ENCODE measurements at regions of chr7 and their contacts with region 1.

Region 1: GRCh38 chr7:20598459-20599309 is 16.8 kb upstream of the ABCB5 start:
- DNase-seq: peak; percentile 95
- H3K4me3 ChIP-seq: peak overlapping the region in 2 of 3 experiments; percentile 2 to 14
- H3K27ac ChIP-seq: peak overlapping the region; percentile 44
- H3K4me1 ChIP-seq: peaks cover 47% of the 10 kb centered on the region
- H3K27me3 ChIP-seq: no peaks in the 10 kb centered on the region
- CTCF ChIP-seq: peak; percentile 53 to 63
- POLR2A ChIP-seq: no peak

Region 2: GRCh38 chr7:19747740-19748339 is 850.8 kb before region 1 on chr7:
- CTCF ChIA-PET with region 1: interaction called, 280 read pairs
- POLR2A ChIA-PET with region 1: no interaction called
- dilution Hi-C with region 1: no loop called
- intact Hi-C with region 1: loop called (anchors 1 kb)
- DNase-seq: peak; percentile 43
- H3K4me3 ChIP-seq: no peak overlapping the region
- H3K27ac ChIP-seq: no peak overlapping the region
- H3K4me1 ChIP-seq: no peaks in the 10 kb centered on the region
- H3K27me3 ChIP-seq: peaks cover 1 to 12% of the 10 kb centered on the region in 2 experiments
- CTCF ChIP-seq: peak; percentile 25 to 46
- POLR2A ChIP-seq: no peak

Region 3: DNA sequence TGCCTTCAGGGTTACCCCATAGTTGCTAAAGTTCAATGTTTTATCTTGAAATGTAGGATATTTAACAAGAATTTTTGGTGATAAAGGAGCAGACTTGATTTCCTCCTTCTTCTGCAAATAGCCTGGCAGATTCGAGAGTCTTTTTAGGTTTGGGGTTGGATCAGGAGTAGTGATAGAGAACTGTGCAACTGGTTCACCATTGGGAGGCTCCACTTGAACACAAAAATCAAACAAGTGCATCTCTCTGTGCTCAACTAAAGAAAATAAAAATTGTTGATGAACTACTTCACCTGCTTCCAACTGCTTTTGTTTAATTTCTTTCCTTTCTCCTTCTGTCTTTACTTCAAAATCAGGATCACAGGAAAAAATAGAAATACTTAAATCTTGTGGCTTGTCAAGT is 440.0 kb before region 1 on chr7:
- CTCF ChIA-PET with region 1: interaction called, 53 read pairs
- POLR2A ChIA-PET with region 1: no interaction called
- dilution Hi-C with region 1: no loop called
- intact Hi-C with region 1: loop called (anchors 1 kb)
- DNase-seq: peak; percentile 39
- H3K4me3 ChIP-seq: no peak overlapping the region
- H3K27ac ChIP-seq: no peak overlapping the region
- H3K4me1 ChIP-seq: no peaks in the 10 kb centered on the region
- H3K27me3 ChIP-seq: no peaks in the 10 kb centered on the region
- CTCF ChIP-seq: peak in 1 of 2 donors; percentile 18
- POLR2A ChIP-seq: no peak

Region 4: GRCh38 chr7:20330240-20330927 is 268.3 kb before region 1 on chr7 and contains the start of gene ITGB8:
- CTCF ChIA-PET with region 1: interaction called, 84 read pairs
- POLR2A ChIA-PET with region 1: interaction called, 8 read pairs
- dilution Hi-C with region 1: no loop called
- intact Hi-C with region 1: loop called (anchors 1 kb)
- DNase-seq: peak; percentile 90
- H3K4me3 ChIP-seq: peak within 1 kb of the TSS; percentile 51 to 62 (median 53)
- H3K27ac ChIP-seq: peak within 1 kb of the TSS; percentile 87
- H3K4me1 ChIP-seq: peaks cover 14% of the 10 kb centered on the region
- H3K27me3 ChIP-seq: no peaks in the 10 kb centered on the region
- CTCF ChIP-seq: no peak
- POLR2A ChIP-seq: no peak
- total RNA-seq, gene ITGB8: 6.5 and 8.2 TPM in 2 replicates

Region 5: GRCh38 chr7:20440472-20441105 is 158.1 kb before region 1 on chr7:
- CTCF ChIA-PET with region 1: interaction called, 24 read pairs
- POLR2A ChIA-PET with region 1: interaction called, 3 read pairs
- dilution Hi-C with region 1: no loop called
- intact Hi-C with region 1: loop called (anchors 1 kb)
- DNase-seq: peak; percentile 40
- H3K4me3 ChIP-seq: no peak overlapping the region
- H3K27ac ChIP-seq: no peak overlapping the region
- H3K4me1 ChIP-seq: peaks cover 14% of the 10 kb centered on the region
- H3K27me3 ChIP-seq: no peaks in the 10 kb centered on the region
- CTCF ChIP-seq: peak; percentile 28 to 33
- POLR2A ChIP-seq: no peak

Region 6: DNA sequence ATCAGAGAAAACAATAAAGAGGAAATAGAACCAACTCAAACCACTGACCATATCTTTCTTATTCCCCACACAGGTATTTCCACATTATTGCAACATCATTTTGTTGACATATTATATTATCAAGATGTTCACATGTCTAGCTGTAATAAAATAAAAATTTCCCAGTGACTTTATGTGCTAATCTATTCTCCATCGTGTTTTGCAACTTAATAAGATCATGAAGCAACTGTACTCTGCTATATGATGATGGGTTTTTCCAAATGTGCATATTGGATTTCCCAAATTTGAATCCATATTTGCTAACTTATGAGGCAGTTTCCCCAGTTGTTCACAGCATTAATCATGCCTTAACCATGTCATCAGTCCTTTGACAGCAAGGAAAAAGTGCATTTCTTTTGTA is 140.2 kb before region 1 on chr7:
- CTCF ChIA-PET with region 1: no interaction called
- POLR2A ChIA-PET with region 1: no interaction called
- dilution Hi-C with region 1: no loop called
- intact Hi-C with region 1: no loop called
- DNase-seq: no peak
- H3K4me3 ChIP-seq: no peak overlapping the region
- H3K27ac ChIP-seq: no peak overlapping the region
- H3K4me1 ChIP-seq: no peaks in the 10 kb centered on the region
- H3K27me3 ChIP-seq: no peaks in the 10 kb centered on the region
- CTCF ChIP-seq: no peak
- POLR2A ChIP-seq: no peak

Region 7: DNA sequence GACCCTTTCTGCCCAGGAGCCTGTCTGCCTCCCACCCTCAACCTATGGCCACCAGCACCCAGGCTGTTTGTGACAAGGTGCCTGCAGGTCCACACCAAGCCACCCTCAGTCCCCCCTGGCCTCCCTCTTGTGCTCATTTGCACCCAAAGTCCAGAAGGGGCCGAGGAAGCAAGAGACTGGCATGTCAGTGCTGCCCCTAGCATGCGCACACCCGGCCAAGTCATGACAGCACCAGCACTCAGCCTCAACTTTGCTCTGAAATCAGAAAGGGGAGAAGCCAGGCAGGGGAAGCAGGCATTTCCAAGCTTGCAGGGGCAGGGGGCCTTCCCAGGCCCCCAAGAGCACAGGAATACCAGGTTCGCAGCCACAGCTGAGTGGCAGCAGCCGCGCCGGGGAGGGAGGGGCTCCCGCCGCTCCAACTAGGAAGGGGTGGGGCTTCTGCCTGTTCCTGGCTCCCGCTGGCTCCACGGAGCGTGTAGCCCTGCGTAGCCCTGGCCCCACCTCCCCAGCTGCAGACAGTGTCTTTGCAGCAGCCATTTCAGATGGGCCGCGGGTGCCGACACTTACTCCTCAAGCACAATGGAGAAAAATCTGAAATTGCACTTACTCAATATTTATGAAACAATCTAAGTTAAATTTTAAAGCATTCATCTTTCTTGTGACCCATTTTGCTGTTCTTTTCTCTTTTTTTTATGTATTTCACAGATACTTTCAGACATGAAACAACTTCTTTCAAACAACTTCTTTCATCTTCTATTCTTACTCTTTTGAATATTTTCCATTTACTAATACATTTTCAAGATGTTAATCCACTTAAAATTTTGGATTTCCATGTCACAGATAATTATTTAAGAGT is 38.1 kb before region 1 on chr7:
- CTCF ChIA-PET with region 1: interaction called, 8 read pairs
- POLR2A ChIA-PET with region 1: no interaction called
- dilution Hi-C with region 1: no loop called
- intact Hi-C with region 1: loop called (anchors 1 kb)
- DNase-seq: no peak
- H3K4me3 ChIP-seq: no peak overlapping the region
- H3K27ac ChIP-seq: peak overlapping the region; percentile 100
- H3K4me1 ChIP-seq: peaks cover 24% of the 10 kb centered on the region
- H3K27me3 ChIP-seq: no peaks in the 10 kb centered on the region
- CTCF ChIP-seq: no peak
- POLR2A ChIP-seq: no peak

Region 8: GRCh38 chr7:20895563-20895962 is 296.9 kb after region 1 on chr7:
- CTCF ChIA-PET with region 1: no interaction called
- POLR2A ChIA-PET with region 1: no interaction called
- dilution Hi-C with region 1: no loop called
- intact Hi-C with region 1: no loop called
- DNase-seq: no peak
- H3K4me3 ChIP-seq: no peak overlapping the region
- H3K27ac ChIP-seq: no peak overlapping the region
- H3K4me1 ChIP-seq: no peaks in the 10 kb centered on the region
- H3K27me3 ChIP-seq: no peaks in the 10 kb centered on the region
- CTCF ChIP-seq: no peak
- POLR2A ChIP-seq: no peak

Measured in endothelial cell of umbilical vein (primary cell).